IMR-90 (cell line): ENCODE measurements at regions of chr19 and their contacts with region 1.

Region 1: DNA sequence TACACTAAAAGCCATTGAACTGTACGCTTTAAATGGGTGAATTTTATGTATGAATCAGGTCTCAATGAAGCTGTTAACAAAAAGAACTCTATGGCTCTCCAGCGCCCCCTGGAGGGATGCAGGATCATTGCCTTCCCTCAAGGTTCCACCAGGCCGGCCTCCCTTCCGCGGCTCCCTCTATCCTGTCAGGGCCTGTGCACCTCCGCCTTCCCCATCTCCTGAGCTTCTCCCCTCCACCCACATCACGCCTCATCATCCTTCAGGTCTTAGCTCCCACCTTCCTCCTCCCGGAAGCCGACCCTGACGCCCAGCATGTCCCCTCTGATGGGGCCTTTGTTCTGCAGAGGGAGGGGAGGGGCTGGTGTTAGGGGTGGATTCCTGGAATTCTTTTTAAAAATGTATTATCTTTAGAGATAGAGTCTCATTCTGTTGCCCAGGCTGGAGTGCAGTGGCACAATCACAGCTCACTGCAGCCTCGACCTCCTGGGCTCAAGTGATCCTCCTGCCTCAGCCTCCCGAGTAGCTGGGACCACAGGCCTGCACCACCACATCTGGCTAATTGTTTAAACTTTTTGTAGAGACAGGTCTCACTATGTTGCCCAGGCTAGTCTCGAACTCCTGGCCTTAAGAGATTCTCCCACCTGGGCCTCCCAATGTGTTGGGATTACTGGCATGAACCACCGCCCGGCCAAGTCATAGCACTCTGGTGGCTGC is 27.7 kb downstream of the MEIS3 start:
- DNase-seq: peak; percentile 66
- ATAC-seq: peak; percentile 95
- H3K4me3 ChIP-seq: no peak overlapping the region
- H3K27ac ChIP-seq: no peak overlapping the region
- H3K4me1 ChIP-seq: peaks cover 3% of the 10 kb centered on the region
- H3K27me3 ChIP-seq: peaks cover 8% of the 10 kb centered on the region; the same call in 1 of the 2 replicates
- CTCF ChIP-seq: peak; percentile 89
- POLR2A ChIP-seq: no peak
- RAD21 ChIP-seq: peak; percentile 82

Region 2: GRCh38 chr19:47284324-47284899 is 107.3 kb before region 1 on chr19:
- CTCF ChIA-PET with region 1: interaction called, 3 read pairs
- POLR2A ChIA-PET with region 1: no interaction called
- dilution Hi-C with region 1: no loop called
- in situ Hi-C with region 1: no loop called
- intact Hi-C with region 1: loop called (anchors 1 kb)
- DNase-seq: peak; percentile 68
- ATAC-seq: peak; percentile 67
- H3K4me3 ChIP-seq: no peak overlapping the region
- H3K27ac ChIP-seq: no peak overlapping the region
- H3K4me1 ChIP-seq: no peaks in the 10 kb centered on the region
- H3K27me3 ChIP-seq: no peaks in the 10 kb centered on the region
- CTCF ChIP-seq: peak; percentile 82
- POLR2A ChIP-seq: no peak
- RAD21 ChIP-seq: peak; percentile 61

Region 3: DNA sequence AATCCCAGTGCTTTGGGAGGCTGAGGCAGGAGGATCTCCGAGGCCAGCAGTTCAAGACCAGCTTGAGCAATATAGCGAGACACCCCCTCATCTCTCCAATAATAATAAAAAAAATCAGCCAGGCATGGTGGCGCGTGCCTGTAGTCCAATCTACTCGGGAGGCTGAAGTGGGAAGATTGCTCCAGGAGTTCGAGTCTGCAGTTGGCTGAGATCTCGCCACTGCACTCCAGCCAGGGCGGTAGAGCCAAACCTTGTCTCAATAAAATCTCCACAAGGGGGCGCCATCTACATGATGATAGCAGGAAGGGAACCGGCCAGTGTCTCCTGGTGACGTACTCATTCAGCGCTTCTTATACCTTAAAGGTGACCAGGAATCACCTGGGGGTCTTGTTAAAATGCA is 95.6 kb before region 1 on chr19:
- CTCF ChIA-PET with region 1: interaction called, 3 read pairs
- POLR2A ChIA-PET with region 1: no interaction called
- dilution Hi-C with region 1: no loop called
- in situ Hi-C with region 1: loop called (anchors 5 kb)
- intact Hi-C with region 1: loop called (anchors 1 kb)
- DNase-seq: peak; percentile 74
- ATAC-seq: peak; percentile 97
- H3K4me3 ChIP-seq: no peak overlapping the region
- H3K27ac ChIP-seq: no peak overlapping the region
- H3K4me1 ChIP-seq: no peaks in the 10 kb centered on the region
- H3K27me3 ChIP-seq: no peaks in the 10 kb centered on the region
- CTCF ChIP-seq: peak; percentile 84
- POLR2A ChIP-seq: no peak
- RAD21 ChIP-seq: peak; percentile 90

Region 4: GRCh38 chr19:47348819-47349795 is 42.6 kb before region 1 on chr19 and contains the start of gene DHX34:
- CTCF ChIA-PET with region 1: interaction called, 8 read pairs
- POLR2A ChIA-PET with region 1: no interaction called
- dilution Hi-C with region 1: no loop called
- in situ Hi-C with region 1: no loop called
- intact Hi-C with region 1: loop called (anchors 1 kb)
- DNase-seq: peak; percentile 99
- ATAC-seq: peak; percentile 100
- H3K4me3 ChIP-seq: peak within 1 kb of the TSS; percentile 84
- H3K27ac ChIP-seq: peak within 1 kb of the TSS; percentile 65
- H3K4me1 ChIP-seq: no peaks in the 10 kb centered on the region; the same call in 1 of the 2 replicates
- H3K27me3 ChIP-seq: no peaks in the 10 kb centered on the region
- CTCF ChIP-seq: peak; percentile 98
- POLR2A ChIP-seq: peak; percentile 69
- RAD21 ChIP-seq: peak; percentile 24; the same call in 1 of the 2 replicates
- total RNA-seq, gene DHX34: 4.5 and 5.6 TPM in 2 replicates

Region 5: GRCh38 chr19:47377208-47377701 is 14.4 kb before region 1 on chr19:
- CTCF ChIA-PET with region 1: no interaction called
- POLR2A ChIA-PET with region 1: no interaction called
- dilution Hi-C with region 1: no loop called
- in situ Hi-C with region 1: no loop called
- intact Hi-C with region 1: no loop called
- DNase-seq: no peak
- ATAC-seq: no peak
- H3K4me3 ChIP-seq: no peak overlapping the region
- H3K27ac ChIP-seq: no peak overlapping the region
- H3K4me1 ChIP-seq: no peaks in the 10 kb centered on the region
- H3K27me3 ChIP-seq: no peaks in the 10 kb centered on the region
- CTCF ChIP-seq: no peak
- POLR2A ChIP-seq: no peak
- RAD21 ChIP-seq: no peak